ENCODE measurements at regions of chr20 and their contacts with region 1.

Region 1: GRCh38 chr20:58850693-58851174 is at the start of gene GNAS-AS1:
- DNase-seq: peak; percentile 48 to 80
- ATAC-seq: peak; percentile 50 to 63
- H3K4me3 ChIP-seq: peak within 1 kb of the TSS; percentile 53 to 64 (median 58)
- H3K27ac ChIP-seq: peak within 1 kb of the TSS in 1 of 4 donors; percentile 44
- H3K4me1 ChIP-seq: no peaks in the 10 kb centered on the region
- H3K27me3 ChIP-seq: peaks cover 17 to 34% (median 26%) of the 10 kb centered on the region in 3 donors
- CTCF ChIP-seq: no peak
- POLR2A ChIP-seq: no peak
- total RNA-seq, gene GNAS-AS1: not detected

Region 2: DNA sequence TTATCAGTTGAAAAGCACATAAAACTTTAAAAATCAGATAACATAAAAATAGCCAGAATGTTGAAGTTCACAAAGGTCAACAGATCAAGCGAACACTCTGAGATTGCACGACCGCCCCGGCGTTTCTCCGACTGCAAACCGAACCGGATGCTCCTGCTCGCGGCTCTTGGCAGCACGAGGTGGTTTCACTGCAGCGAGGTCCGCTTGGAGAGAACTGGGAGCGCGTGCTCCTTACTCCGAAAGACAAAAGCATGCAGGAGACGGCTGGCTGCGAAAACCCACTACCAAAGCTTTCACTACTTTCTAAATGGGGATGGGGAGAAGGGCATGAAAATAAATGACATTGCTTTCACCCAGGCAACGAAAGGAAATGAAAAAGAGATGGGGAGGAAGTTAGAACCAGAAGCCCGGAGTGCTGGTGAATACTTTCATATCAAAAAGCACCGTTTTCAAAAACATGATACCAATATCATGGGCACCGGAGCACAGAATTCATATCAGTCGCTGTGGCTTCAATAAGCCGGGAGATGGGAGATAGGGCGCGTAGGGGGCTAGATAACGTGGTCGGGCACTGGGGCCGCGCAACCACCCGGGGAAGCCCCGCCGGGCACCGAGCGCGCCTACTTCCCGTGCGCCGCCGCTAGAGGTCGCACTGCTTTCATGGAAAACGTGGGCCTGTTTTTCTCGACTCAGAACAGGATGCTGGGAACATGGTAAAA is 614.0 kb before region 1 on chr20:
- in situ Hi-C with region 1: loop called in 2 of 4 experiments (anchors 25 kb)
- intact Hi-C with region 1: no loop called
- DNase-seq: peak; percentile 32 to 46
- ATAC-seq: peak; percentile 66 to 84
- H3K4me3 ChIP-seq: peak overlapping the region; percentile 38 to 60 (median 50)
- H3K27ac ChIP-seq: no peak overlapping the region
- H3K4me1 ChIP-seq: no peaks in the 10 kb centered on the region
- H3K27me3 ChIP-seq: no peaks in the 10 kb centered on the region
- CTCF ChIP-seq: peak; percentile 84 to 98 (median 92)
- POLR2A ChIP-seq: no peak

Region 3: DNA sequence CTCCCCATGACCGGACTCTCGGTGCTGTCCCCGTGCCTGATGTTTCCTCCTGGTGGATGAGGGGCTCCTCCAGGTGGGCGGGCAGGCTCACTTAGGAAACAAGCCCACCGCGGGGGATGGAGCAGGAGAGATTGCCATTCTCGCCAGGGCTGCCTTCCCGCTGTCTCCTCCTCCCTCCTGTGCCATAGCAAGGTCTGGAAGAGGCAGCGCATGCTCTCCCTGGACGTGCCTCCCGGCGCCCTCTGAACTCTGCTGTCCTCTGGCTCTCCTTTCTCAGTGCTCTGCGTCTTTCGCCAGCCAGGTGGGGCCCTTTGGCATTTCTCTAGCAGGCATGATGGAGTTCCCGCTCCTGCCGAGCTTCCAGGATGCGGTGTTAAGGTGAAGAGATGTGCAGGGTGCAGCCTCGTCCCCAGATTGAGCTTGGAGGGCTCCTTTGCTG is 175.6 kb before region 1 on chr20:
- in situ Hi-C with region 1: no loop called
- intact Hi-C with region 1: no loop called
- DNase-seq: no peak
- ATAC-seq: no peak
- H3K4me3 ChIP-seq: no peak overlapping the region
- H3K27ac ChIP-seq: no peak overlapping the region
- H3K4me1 ChIP-seq: no peaks in the 10 kb centered on the region
- H3K27me3 ChIP-seq: no peaks in the 10 kb centered on the region
- CTCF ChIP-seq: no peak
- POLR2A ChIP-seq: no peak

Region 4: GRCh38 chr20:58790454-58790853 is 60.3 kb before region 1 on chr20:
- in situ Hi-C with region 1: no loop called
- intact Hi-C with region 1: no loop called
- DNase-seq: no peak
- ATAC-seq: no peak
- H3K4me3 ChIP-seq: no peak overlapping the region
- H3K27ac ChIP-seq: no peak overlapping the region
- H3K4me1 ChIP-seq: no peaks in the 10 kb centered on the region
- H3K27me3 ChIP-seq: peaks cover 0 to 7% (median 0%) of the 10 kb centered on the region in 3 donors
- CTCF ChIP-seq: no peak
- POLR2A ChIP-seq: no peak

Region 5: GRCh38 chr20:58822149-58822548 is 28.6 kb before region 1 on chr20:
- in situ Hi-C with region 1: no loop called
- intact Hi-C with region 1: loop called (anchors 1 kb)
- DNase-seq: peak in 1 of 2 donors; percentile 67
- ATAC-seq: peak in 1 of 2 donors; percentile 63
- H3K4me3 ChIP-seq: no peak overlapping the region
- H3K27ac ChIP-seq: peak overlapping the region in 1 of 4 donors; percentile 50
- H3K4me1 ChIP-seq: peaks cover 0 to 23% of the 10 kb centered on the region in 2 donors
- H3K27me3 ChIP-seq: no peaks in the 10 kb centered on the region
- CTCF ChIP-seq: peak in 3 of 5 experiments; percentile 30 to 51 (median 36)
- POLR2A ChIP-seq: no peak

Region 6: GRCh38 chr20:59403261-59403961 is 552.7 kb after region 1 on chr20:
- in situ Hi-C with region 1: loop called in 1 of 4 experiments (anchors 25 kb)
- intact Hi-C with region 1: no loop called
- DNase-seq: no peak
- ATAC-seq: no peak
- H3K4me3 ChIP-seq: peak overlapping the region in 1 of 4 donors; percentile 24
- H3K27ac ChIP-seq: no peak overlapping the region
- H3K4me1 ChIP-seq: peaks cover 0 to 5% of the 10 kb centered on the region in 2 donors
- H3K27me3 ChIP-seq: peaks cover 42 to 60% (median 48%) of the 10 kb centered on the region in 3 donors
- CTCF ChIP-seq: peak; percentile 66 to 85 (median 68)
- POLR2A ChIP-seq: no peak

Region 7: DNA sequence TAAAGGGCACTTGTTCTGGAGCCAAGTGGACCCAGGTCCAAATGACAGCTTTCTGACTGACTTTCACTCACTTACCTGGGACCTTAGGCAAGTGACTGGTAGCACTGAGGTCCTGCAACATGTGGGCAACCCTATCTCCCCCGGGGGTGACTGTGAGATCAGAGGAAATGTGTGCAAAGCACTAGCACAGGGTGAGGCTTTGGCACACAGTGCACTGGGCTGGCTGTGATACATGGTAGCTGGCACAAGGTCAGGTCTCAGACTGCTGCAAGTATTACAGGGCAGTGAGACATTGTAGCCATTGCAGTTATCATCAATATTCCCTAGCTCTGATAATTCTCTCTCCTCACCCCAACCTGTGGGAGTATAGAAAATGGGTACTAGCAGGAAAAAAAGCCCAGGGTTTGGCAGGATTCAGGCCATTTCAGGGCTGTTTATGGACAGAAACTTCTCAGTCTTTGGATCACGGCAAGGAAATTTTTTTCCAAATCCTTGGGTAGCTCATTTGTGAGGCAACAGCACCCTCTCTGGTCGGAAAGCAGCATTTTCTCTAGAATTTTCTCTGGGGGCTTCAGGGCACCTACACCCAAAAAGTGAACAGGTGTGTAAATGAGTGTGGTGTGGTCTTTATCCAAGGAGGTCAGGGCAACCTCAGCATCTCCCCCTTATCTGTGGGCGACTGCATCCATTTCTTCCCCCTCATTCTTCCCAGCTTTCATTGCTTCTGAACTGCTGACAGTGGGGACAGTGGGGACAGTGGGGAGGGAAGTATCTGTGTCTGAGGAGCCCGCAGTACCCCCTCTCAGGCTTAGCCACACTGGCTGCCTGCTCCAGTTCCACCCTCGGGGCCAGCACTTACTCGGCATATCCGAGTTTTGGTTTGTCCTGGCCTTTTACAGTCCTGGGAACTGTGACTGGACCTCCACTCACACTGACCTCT is 604.9 kb after region 1 on chr20:
- in situ Hi-C with region 1: loop called in 2 of 4 experiments (anchors 25 kb)
- intact Hi-C with region 1: no loop called
- DNase-seq: no peak
- ATAC-seq: peak in 1 of 2 donors; percentile 36
- H3K4me3 ChIP-seq: no peak overlapping the region
- H3K27ac ChIP-seq: no peak overlapping the region
- H3K4me1 ChIP-seq: no peaks in the 10 kb centered on the region
- H3K27me3 ChIP-seq: no peaks in the 10 kb centered on the region
- CTCF ChIP-seq: peak in 2 of 5 experiments; percentile 31 to 32
- POLR2A ChIP-seq: no peak

Region 8: GRCh38 chr20:59620854-59621485 is 770.2 kb after region 1 on chr20:
- in situ Hi-C with region 1: no loop called
- intact Hi-C with region 1: no loop called
- DNase-seq: no peak
- ATAC-seq: no peak
- H3K4me3 ChIP-seq: no peak overlapping the region
- H3K27ac ChIP-seq: no peak overlapping the region
- H3K4me1 ChIP-seq: no peaks in the 10 kb centered on the region
- H3K27me3 ChIP-seq: peaks cover 0 to 5% (median 0%) of the 10 kb centered on the region in 3 donors
- CTCF ChIP-seq: no peak
- POLR2A ChIP-seq: no peak